AG04449 (cell line): ENCODE measurements at regions of chr17 and their contacts with region 1.

Region 1: GRCh38 chr17:55421179-55421934 is at the start of gene MMD:
- DNase-seq: no peak
- H3K4me3 ChIP-seq: peak within 1 kb of the TSS; percentile 83
- CTCF ChIP-seq: no peak

Region 2: DNA sequence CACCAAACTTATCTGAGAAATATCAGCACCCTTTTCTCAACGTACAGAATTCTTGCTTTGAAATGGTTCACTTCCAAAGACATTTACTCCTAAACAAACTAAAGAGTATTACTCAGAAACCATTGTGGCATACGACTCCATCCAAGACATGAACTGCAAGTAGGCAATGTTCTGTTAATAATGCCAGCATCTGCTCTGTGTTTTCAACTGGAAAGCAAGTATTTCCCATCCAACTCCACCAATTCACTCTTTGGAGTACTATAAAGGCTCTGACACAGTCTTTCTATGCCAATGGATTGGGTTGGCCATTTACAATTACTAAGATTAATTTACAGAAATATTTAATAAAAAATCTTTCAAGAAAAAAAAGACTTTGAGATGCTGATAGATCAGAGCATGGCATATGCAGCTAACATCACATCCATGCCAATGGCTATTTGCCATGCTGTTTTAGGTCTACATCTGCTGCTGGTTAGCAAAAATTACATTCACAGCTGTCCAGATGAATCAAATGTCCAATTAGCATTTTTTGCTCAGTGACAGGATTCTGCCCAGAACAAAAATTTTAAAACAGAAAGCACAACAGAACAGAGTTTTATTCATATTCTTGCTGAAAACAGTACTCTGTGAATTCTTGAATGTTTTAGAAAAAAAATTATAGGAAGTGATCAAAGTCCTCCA is 222.5 kb before region 1 on chr17:
- CTCF ChIA-PET with region 1: no interaction called
- POLR2A ChIA-PET with region 1: no interaction called
- DNase-seq: no peak
- H3K4me3 ChIP-seq: no peak overlapping the region
- CTCF ChIP-seq: no peak

Region 3: DNA sequence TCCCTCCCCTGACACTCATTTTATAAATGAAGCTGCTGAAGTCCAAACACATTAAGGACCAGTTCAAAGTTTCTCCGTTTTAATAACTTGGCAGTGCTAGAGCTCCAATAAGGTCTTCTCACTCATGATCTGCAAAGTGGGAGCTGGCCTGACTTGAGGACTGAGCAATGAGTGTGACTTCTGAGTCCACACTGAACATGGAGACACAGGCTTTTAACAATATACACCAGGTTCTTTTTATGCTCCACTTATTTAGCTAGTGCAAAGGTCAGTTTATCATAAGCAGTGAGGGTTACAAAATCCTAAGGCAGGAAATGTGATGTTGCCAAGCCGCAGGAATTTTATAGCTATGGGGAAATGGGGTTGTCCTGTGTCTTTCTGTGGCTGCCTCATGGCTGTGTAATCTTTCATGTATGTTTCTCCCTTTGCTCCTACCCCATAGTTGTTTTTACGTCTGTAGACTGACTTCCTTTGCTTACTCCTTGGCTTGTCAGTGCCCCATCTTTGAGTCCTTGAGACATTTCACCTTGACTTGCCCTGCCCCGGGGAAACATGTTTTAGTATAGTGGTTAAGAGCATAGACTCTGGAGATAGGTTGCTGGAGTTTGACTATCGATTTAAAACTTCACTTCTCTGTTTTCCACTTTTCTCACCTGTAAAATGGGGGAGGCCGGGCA is 12.4 kb after region 1 on chr17:
- CTCF ChIA-PET with region 1: interaction called, 10 read pairs
- POLR2A ChIA-PET with region 1: interaction called, 3 read pairs
- DNase-seq: peak; percentile 70
- H3K4me3 ChIP-seq: no peak overlapping the region
- CTCF ChIP-seq: no peak